ENCODE measurements at regions of chr22 and their contacts with region 1.

Region 1: DNA sequence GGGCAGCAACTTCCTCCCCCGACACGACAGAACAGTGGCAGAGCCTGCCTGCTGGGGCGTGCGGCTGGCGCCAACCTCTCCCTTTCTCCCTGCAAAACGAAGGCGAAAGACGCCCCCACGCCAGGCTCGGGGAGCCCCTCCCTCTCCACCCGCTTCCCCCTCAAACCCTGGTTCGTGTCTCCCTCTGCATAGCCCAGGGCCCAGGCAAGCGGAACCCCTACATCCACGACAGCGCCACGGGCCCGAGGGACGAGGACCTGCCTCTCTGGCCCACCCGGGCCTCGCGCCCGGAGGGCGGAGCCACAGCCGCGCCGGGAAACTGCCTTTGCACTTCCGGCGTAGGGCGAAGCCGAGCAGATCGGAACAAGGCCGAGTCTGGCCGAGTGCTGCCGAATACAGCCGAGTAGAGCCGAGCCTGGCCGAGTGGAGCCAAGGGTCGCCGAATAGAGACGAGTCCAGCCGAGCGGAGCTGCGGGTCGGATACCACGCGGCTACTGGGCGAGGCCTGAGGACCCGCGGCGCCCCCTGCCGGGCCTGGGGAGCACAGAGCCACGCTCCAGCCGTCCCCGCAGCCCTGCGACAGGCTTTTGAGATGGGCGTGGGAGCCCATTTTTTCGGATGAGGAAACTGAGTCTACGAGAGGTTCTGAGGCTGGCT is 11.2 kb upstream of the C1QTNF6 start:
- DNase-seq: peak; percentile 97 to 100 (median 99)
- H3K4me3 ChIP-seq: peak overlapping the region; percentile 57 to 73
- H3K4me3 Mint-ChIP-seq: peak overlapping the region; percentile 79 to 91 (median 84)
- H3K27ac ChIP-seq: peak overlapping the region; percentile 93
- H3K27ac Mint-ChIP-seq: peak overlapping the region; percentile 89 to 96 (median 93)
- H3K4me1 ChIP-seq: peaks cover 39% of the 10 kb centered on the region
- H3K4me1 Mint-ChIP-seq: peaks cover 10 to 40% (median 22%) of the 10 kb centered on the region in 4 donors
- H3K27me3 ChIP-seq: no peaks in the 10 kb centered on the region
- H3K27me3 Mint-ChIP-seq: no peaks in the 10 kb centered on the region

Region 2: GRCh38 chr22:36775964-36776669 is 423.1 kb before region 1 on chr22 and contains the start of gene IFT27:
- CTCF ChIA-PET with region 1: interaction called, 3 read pairs
- POLR2A ChIA-PET with region 1: interaction called, 5 read pairs
- intact Hi-C with region 1: loop called (anchors 1 kb)
- DNase-seq: peak; percentile 96 to 100 (median 99)
- H3K4me3 ChIP-seq: peak within 1 kb of the TSS; percentile 51 to 64
- H3K4me3 Mint-ChIP-seq: peak within 1 kb of the TSS; percentile 89 to 97 (median 92)
- H3K27ac ChIP-seq: peak within 1 kb of the TSS; percentile 73
- H3K27ac Mint-ChIP-seq: peak within 1 kb of the TSS; percentile 93 to 99 (median 98)
- H3K4me1 ChIP-seq: peaks cover 17% of the 10 kb centered on the region
- H3K4me1 Mint-ChIP-seq: peaks cover 16 to 32% (median 24%) of the 10 kb centered on the region in 4 donors
- H3K27me3 ChIP-seq: no peaks in the 10 kb centered on the region
- H3K27me3 Mint-ChIP-seq: no peaks in the 10 kb centered on the region
- total RNA-seq, gene IFT27: 38.2 to 42.6 TPM

Region 3: GRCh38 chr22:36977947-36978660 is 221.1 kb before region 1 on chr22:
- CTCF ChIA-PET with region 1: interaction called, 3 read pairs
- POLR2A ChIA-PET with region 1: interaction called, 4 read pairs
- intact Hi-C with region 1: loop called (anchors 1 kb)
- DNase-seq: peak; percentile 86 to 89 (median 88)
- H3K4me3 ChIP-seq: peak overlapping the region; percentile 41 to 67
- H3K4me3 Mint-ChIP-seq: peak overlapping the region; percentile 88 to 98 (median 96)
- H3K27ac ChIP-seq: peak overlapping the region; percentile 59
- H3K27ac Mint-ChIP-seq: peak overlapping the region; percentile 82 to 99 (median 96)
- H3K4me1 ChIP-seq: peaks cover 4% of the 10 kb centered on the region
- H3K4me1 Mint-ChIP-seq: peaks cover 3 to 14% (median 8%) of the 10 kb centered on the region in 4 donors
- H3K27me3 ChIP-seq: no peaks in the 10 kb centered on the region
- H3K27me3 Mint-ChIP-seq: peaks cover 3 to 5% of the 10 kb centered on the region in 2 donors

Region 4: DNA sequence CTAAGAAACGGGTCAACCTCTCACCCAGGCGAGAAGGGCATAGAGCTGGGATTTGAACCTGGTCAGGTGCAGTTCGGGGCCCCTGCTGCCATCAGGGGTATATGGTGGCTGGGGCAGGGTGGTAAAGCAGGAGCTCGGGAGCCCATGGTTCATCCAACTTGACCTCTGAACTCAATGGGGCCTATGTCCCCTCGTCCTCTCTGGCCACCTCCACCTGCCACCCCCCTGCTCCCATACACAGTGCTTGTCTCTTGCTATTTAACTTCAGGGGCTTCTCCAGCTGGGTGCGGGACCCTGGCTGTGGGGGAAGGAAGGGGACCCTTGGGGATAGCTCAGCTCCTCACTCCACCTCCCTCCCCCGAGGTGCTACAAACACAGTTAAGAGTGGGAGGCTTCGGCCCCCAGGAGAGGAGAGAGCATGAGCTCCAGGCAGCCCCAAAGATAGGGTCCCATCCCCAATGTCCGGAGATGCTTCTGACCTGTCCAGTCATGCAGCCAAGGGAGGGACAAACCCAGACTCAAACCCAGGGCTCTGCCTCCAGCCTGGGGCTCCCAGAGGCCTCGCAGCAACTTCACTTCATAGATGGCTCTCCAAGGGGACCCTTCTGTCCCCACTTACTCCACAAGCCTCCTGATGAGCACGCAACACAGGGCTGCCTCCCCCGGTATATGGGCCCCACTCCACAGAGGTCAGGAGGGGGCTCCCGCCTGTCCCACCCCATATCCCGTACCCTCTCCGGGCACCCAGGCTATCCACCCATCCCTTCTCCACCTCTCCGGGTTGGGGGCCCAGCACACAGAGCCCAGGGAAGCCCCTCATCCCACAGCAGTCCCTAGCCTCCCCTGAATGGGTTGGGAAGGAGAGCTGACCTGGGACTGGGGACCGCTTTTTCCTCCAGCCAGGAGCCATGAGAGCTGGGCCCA is 50.2 kb before region 1 on chr22:
- CTCF ChIA-PET with region 1: interaction called, 32 read pairs
- POLR2A ChIA-PET with region 1: interaction called, 51 read pairs
- intact Hi-C with region 1: loop called (anchors 1 kb)
- DNase-seq: peak in 1 of 5 donors; percentile 44
- H3K4me3 ChIP-seq: peak overlapping the region; percentile 72
- H3K4me3 Mint-ChIP-seq: peak overlapping the region; percentile 88 to 96 (median 92)
- H3K27ac ChIP-seq: peak overlapping the region; percentile 95
- H3K27ac Mint-ChIP-seq: peak overlapping the region; percentile 96 to 100 (median 98)
- H3K4me1 ChIP-seq: peaks cover 63% of the 10 kb centered on the region
- H3K4me1 Mint-ChIP-seq: peaks cover 43 to 74% (median 58%) of the 10 kb centered on the region in 4 donors
- H3K27me3 ChIP-seq: no peaks in the 10 kb centered on the region
- H3K27me3 Mint-ChIP-seq: peaks cover 0 to 4% of the 10 kb centered on the region in 2 donors

Region 5: GRCh38 chr22:37210041-37210803 is 11.0 kb after region 1 on chr22:
- CTCF ChIA-PET with region 1: interaction called, 16 read pairs
- POLR2A ChIA-PET with region 1: interaction called, 125 read pairs
- intact Hi-C with region 1: no loop called
- DNase-seq: no peak
- H3K4me3 ChIP-seq: no peak overlapping the region
- H3K4me3 Mint-ChIP-seq: no peak overlapping the region
- H3K27ac ChIP-seq: no peak overlapping the region
- H3K27ac Mint-ChIP-seq: peak overlapping the region in 1 of 7 donors; percentile 53
- H3K4me1 ChIP-seq: peaks cover 14% of the 10 kb centered on the region
- H3K4me1 Mint-ChIP-seq: peaks cover 8 to 17% (median 11%) of the 10 kb centered on the region in 4 donors
- H3K27me3 ChIP-seq: no peaks in the 10 kb centered on the region
- H3K27me3 Mint-ChIP-seq: no peaks in the 10 kb centered on the region

Region 6: GRCh38 chr22:37237371-37238268 is 38.4 kb after region 1 on chr22:
- CTCF ChIA-PET with region 1: interaction called, 106 read pairs
- POLR2A ChIA-PET with region 1: interaction called, 129 read pairs
- intact Hi-C with region 1: loop called (anchors 1 kb)
- DNase-seq: no peak
- H3K4me3 ChIP-seq: peak overlapping the region; percentile 4 to 8
- H3K4me3 Mint-ChIP-seq: peak overlapping the region; percentile 80 to 96 (median 88)
- H3K27ac ChIP-seq: peak overlapping the region; percentile 91
- H3K27ac Mint-ChIP-seq: peak overlapping the region; percentile 87 to 98 (median 97)
- H3K4me1 ChIP-seq: peaks cover 96% of the 10 kb centered on the region
- H3K4me1 Mint-ChIP-seq: peaks cover 68 to 100% (median 88%) of the 10 kb centered on the region in 4 donors
- H3K27me3 ChIP-seq: no peaks in the 10 kb centered on the region
- H3K27me3 Mint-ChIP-seq: no peaks in the 10 kb centered on the region

Region 7: GRCh38 chr22:37559901-37560607 is 360.8 kb after region 1 on chr22 and contains the start of gene CDC42EP1:
- CTCF ChIA-PET with region 1: no interaction called
- POLR2A ChIA-PET with region 1: no interaction called
- intact Hi-C with region 1: no loop called
- DNase-seq: no peak
- H3K4me3 ChIP-seq: peak within 1 kb of the TSS in 1 of 2 donors; percentile 27
- H3K4me3 Mint-ChIP-seq: peak within 1 kb of the TSS in 6 of 8 donors; percentile 47 to 72 (median 64)
- H3K27ac ChIP-seq: no peak within 1 kb of the TSS
- H3K27ac Mint-ChIP-seq: no peak within 1 kb of the TSS
- H3K4me1 ChIP-seq: peaks cover 18% of the 10 kb centered on the region
- H3K4me1 Mint-ChIP-seq: peaks cover 4 to 32% (median 14%) of the 10 kb centered on the region in 4 donors
- H3K27me3 ChIP-seq: peaks cover 28% of the 10 kb centered on the region
- H3K27me3 Mint-ChIP-seq: peaks cover 27 to 43% of the 10 kb centered on the region in 2 donors
- total RNA-seq, gene CDC42EP1: not detected

Region 8: GRCh38 chr22:37862570-37863325 is 663.5 kb after region 1 on chr22:
- CTCF ChIA-PET with region 1: no interaction called
- POLR2A ChIA-PET with region 1: no interaction called
- intact Hi-C with region 1: no loop called
- DNase-seq: no peak
- H3K4me3 ChIP-seq: no peak overlapping the region
- H3K4me3 Mint-ChIP-seq: no peak overlapping the region
- H3K27ac ChIP-seq: no peak overlapping the region
- H3K27ac Mint-ChIP-seq: peak overlapping the region in 3 of 7 donors; percentile 38 to 74 (median 53)
- H3K4me1 ChIP-seq: peaks cover 5% of the 10 kb centered on the region
- H3K4me1 Mint-ChIP-seq: peaks cover 2 to 5% (median 4%) of the 10 kb centered on the region in 4 donors
- H3K27me3 ChIP-seq: no peaks in the 10 kb centered on the region
- H3K27me3 Mint-ChIP-seq: no peaks in the 10 kb centered on the region

Measured in CD4-positive, alpha-beta memory T cell (primary cell).